Activated CD4-positive, alpha-beta T cell treated with anti-CD3 and anti-CD28 coated beads for 36 hours (primary cell): ENCODE measurements at regions of chr12 and their contacts with region 1.

Region 1: DNA sequence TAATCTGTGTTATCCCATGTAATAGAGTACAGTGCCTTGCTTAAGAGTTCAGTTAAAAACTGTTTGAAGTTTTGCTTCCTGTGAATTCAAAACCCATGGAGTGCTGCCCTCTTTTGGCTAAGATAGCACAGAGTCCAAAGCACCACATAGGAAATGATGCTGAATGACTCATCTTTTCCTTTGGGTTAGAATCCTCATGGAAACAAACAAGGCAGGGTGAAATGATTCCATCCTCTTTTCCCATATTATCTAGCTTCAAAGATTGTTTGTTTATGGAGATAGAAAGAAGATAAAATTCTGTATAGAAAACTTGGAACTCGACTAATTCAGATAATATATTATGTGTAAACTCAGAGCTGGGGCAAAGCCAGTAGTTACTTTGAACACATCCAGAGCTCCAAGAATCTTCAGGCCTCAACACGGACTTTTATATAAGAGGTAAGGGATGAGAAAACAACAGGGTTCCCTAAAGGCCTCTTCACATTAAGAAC is 87.4 kb downstream of the OTOGL start:
- DNase-seq: peak; percentile 30
- ATAC-seq: peak; percentile 85
- H3K4me3 Mint-ChIP-seq: no peak overlapping the region
- H3K27ac Mint-ChIP-seq: no peak overlapping the region
- H3K4me1 Mint-ChIP-seq: peaks cover 5% of the 10 kb centered on the region
- H3K27me3 Mint-ChIP-seq: no peaks in the 10 kb centered on the region

Region 2: GRCh38 chr12:79547735-79548609 is 638.8 kb before region 1 on chr12:
- CTCF ChIA-PET with region 1: no interaction called
- POLR2A ChIA-PET with region 1: no interaction called
- intact Hi-C with region 1: loop called in 1 of 2 experiments (anchors 1 kb)
- DNase-seq: peak; percentile 37
- ATAC-seq: no peak
- H3K4me3 Mint-ChIP-seq: no peak overlapping the region
- H3K27ac Mint-ChIP-seq: no peak overlapping the region
- H3K4me1 Mint-ChIP-seq: no peaks in the 10 kb centered on the region
- H3K27me3 Mint-ChIP-seq: no peaks in the 10 kb centered on the region

Region 3: DNA sequence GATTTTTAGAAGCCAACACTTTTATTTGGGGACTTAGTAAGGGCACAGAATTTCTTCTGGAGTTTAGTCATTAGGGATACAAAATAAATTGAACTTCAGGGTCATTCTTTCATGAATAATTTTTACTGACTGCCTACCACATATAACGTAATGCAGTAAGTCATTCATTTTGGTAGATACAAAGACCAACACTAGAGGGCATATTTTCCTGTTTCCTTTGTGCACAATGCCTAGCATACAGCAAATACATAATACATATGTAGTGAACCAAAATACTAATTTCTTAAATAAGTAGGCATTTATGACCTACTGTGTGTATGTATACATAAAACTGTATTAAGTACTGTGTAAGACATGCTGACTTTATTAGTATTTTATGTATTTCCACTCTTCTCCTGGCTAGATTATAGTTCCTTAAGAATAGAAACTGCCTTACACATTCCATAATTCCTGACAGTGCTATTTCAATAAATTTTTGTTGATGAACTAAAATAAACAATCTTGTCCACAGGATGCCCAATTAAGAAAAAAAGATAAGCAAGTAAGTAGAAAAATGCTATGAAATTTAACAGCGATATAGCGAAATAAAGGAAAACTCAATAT is 299.8 kb before region 1 on chr12:
- CTCF ChIA-PET with region 1: no interaction called
- POLR2A ChIA-PET with region 1: no interaction called
- intact Hi-C with region 1: loop called (anchors 2 kb)
- DNase-seq: no peak
- ATAC-seq: peak; percentile 82
- H3K4me3 Mint-ChIP-seq: no peak overlapping the region
- H3K27ac Mint-ChIP-seq: no peak overlapping the region
- H3K4me1 Mint-ChIP-seq: peaks cover 66% of the 10 kb centered on the region
- H3K27me3 Mint-ChIP-seq: no peaks in the 10 kb centered on the region

Region 4: DNA sequence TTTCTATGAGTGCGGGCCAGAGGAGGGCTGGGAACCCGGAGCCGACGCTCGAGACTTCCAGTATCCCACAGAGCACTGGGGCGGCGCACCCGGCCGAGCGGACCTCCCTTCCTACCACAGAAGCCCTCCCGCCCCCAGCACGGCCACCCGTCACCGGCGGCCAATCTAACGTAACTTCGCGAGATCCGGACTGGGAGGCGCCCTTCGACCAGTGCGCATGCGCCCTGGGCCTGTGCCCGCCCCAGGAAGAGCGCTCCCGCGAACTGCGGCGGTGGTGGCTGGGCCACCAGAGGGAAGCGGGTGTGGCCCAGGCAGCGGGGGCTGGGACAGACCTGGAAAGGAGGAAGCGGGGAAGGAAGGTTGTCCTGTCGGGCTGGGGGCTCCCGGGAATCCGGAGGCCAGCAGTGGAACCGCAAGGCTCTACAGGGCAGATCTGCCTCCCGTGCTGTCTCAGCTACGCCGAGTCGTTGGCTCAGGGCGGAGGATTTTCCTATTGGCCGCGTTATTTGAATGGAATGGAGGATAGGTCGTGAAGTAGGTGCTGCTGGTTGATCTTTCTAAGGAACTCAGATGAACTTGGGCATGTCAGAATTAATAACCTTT is 251.7 kb before region 1 on chr12 and contains the start of gene PPP1R12A:
- CTCF ChIA-PET with region 1: no interaction called
- POLR2A ChIA-PET with region 1: no interaction called
- intact Hi-C with region 1: loop called in 1 of 2 experiments (anchors 2 kb)
- DNase-seq: peak; percentile 97
- ATAC-seq: peak; percentile 87
- H3K4me3 Mint-ChIP-seq: peak within 1 kb of the TSS; percentile 95
- H3K27ac Mint-ChIP-seq: peak within 1 kb of the TSS; percentile 96
- H3K4me1 Mint-ChIP-seq: peaks cover 32% of the 10 kb centered on the region
- H3K27me3 Mint-ChIP-seq: no peaks in the 10 kb centered on the region
- total RNA-seq, gene PPP1R12A: 72.2 to 134 TPM

Region 5: DNA sequence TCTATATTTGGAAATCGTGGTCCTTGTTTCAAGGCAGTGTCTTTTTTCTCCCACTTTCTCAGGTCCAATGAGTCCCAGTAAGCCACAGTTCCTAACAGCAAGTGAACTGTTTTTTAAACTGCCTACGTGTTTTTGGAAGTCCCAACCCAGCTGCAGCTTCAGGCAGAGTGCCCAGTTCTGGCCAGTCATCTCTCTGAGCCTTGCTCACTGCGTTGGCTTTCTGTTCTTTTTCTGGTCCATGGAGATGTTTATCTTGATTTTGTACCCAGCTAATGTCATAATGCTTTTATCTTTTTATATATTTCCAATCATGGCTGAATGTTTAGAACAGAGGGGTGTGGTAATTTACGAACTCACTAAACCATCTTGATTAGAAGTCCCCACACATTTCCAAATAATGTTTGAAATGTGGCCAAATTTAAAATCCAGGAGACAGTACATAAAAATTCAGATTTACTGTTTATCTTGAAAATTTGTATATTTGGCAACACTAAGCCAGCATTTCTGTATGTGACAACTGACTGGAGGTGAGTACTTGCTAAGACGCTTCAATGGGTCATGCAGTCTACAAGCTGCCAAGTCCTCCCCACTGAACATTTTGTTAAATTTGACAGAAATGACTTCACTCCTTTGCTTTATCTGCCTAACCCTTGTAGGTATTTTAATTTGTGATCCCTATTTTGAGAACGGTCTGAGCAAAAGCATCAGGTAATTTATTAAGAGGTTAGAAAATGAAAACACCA is 133.6 kb before region 1 on chr12:
- CTCF ChIA-PET with region 1: no interaction called
- POLR2A ChIA-PET with region 1: no interaction called
- intact Hi-C with region 1: loop called in 1 of 2 experiments (anchors 5 kb)
- DNase-seq: no peak
- ATAC-seq: no peak
- H3K4me3 Mint-ChIP-seq: no peak overlapping the region
- H3K27ac Mint-ChIP-seq: no peak overlapping the region
- H3K4me1 Mint-ChIP-seq: peaks cover 4% of the 10 kb centered on the region
- H3K27me3 Mint-ChIP-seq: no peaks in the 10 kb centered on the region